CD8-positive, alpha-beta T cell (primary cell): ENCODE measurements at regions of chr22 and their contacts with region 1.

Region 1: GRCh38 chr22:19717691-19718455 is 3.6 kb downstream of the SEPTIN5 start:
- DNase-seq: peak; percentile 71 to 90 (median 78)
- ATAC-seq: peak; percentile 95
- H3K4me3 ChIP-seq: peak overlapping the region; percentile 29 to 46
- H3K4me3 Mint-ChIP-seq: peak overlapping the region; percentile 65
- H3K27ac ChIP-seq: no peak overlapping the region
- H3K27ac Mint-ChIP-seq: no peak overlapping the region
- H3K4me1 ChIP-seq: peaks cover 29% of the 10 kb centered on the region
- H3K4me1 Mint-ChIP-seq: peaks cover 12% of the 10 kb centered on the region
- H3K27me3 ChIP-seq: peaks cover 17 to 20% of the 10 kb centered on the region in 2 experiments
- H3K27me3 Mint-ChIP-seq: peaks cover 36% of the 10 kb centered on the region
- CTCF ChIP-seq: peak; percentile 97

Region 2: GRCh38 chr22:19679522-19680101 is 38.3 kb before region 1 on chr22:
- CTCF ChIA-PET with region 1: interaction called, 8 read pairs
- POLR2A ChIA-PET with region 1: no interaction called
- intact Hi-C with region 1: loop called in 1 of 2 experiments (anchors 1 kb)
- DNase-seq: peak in 7 of 9 experiments; percentile 25 to 72 (median 49)
- ATAC-seq: no peak
- H3K4me3 ChIP-seq: no peak overlapping the region
- H3K4me3 Mint-ChIP-seq: no peak overlapping the region
- H3K27ac ChIP-seq: no peak overlapping the region
- H3K27ac Mint-ChIP-seq: no peak overlapping the region
- H3K4me1 ChIP-seq: no peaks in the 10 kb centered on the region
- H3K4me1 Mint-ChIP-seq: no peaks in the 10 kb centered on the region
- H3K27me3 ChIP-seq: peaks cover 0 to 4% of the 10 kb centered on the region in 2 experiments
- H3K27me3 Mint-ChIP-seq: peaks cover 27% of the 10 kb centered on the region
- CTCF ChIP-seq: peak; percentile 83

Region 3: GRCh38 chr22:19820628-19821522 is 103.0 kb after region 1 on chr22:
- CTCF ChIA-PET with region 1: no interaction called
- POLR2A ChIA-PET with region 1: no interaction called
- intact Hi-C with region 1: no loop called
- DNase-seq: peak in 1 of 9 experiments; percentile 41
- ATAC-seq: no peak
- H3K4me3 ChIP-seq: no peak overlapping the region
- H3K4me3 Mint-ChIP-seq: no peak overlapping the region
- H3K27ac ChIP-seq: no peak overlapping the region
- H3K27ac Mint-ChIP-seq: no peak overlapping the region
- H3K4me1 ChIP-seq: no peaks in the 10 kb centered on the region
- H3K4me1 Mint-ChIP-seq: peaks cover 3% of the 10 kb centered on the region
- H3K27me3 ChIP-seq: no peaks in the 10 kb centered on the region
- H3K27me3 Mint-ChIP-seq: no peaks in the 10 kb centered on the region
- CTCF ChIP-seq: no peak